Right cardiac atrium (tissue), 5 donors: ENCODE measurements at regions of chr9 and their contacts with region 1.

Region 1: GRCh38 chr9:108565651-108566378 is 290.0 kb downstream of the ACTL7B start:
- DNase-seq: peak in 2 of 3 donors; percentile 27 to 72
- ATAC-seq: peak; percentile 92 to 95
- H3K4me3 ChIP-seq: no peak overlapping the region
- H3K27ac ChIP-seq: no peak overlapping the region
- H3K4me1 ChIP-seq: peaks cover 4% of the 10 kb centered on the region
- H3K27me3 ChIP-seq: no peaks in the 10 kb centered on the region

Region 2: GRCh38 chr9:107465467-107466451 is 1100.1 kb before region 1 on chr9:
- intact Hi-C with region 1: loop called in 2 of 4 experiments (anchors 5 kb)
- DNase-seq: peak; percentile 84 to 93 (median 91)
- ATAC-seq: peak; percentile 99
- H3K4me3 ChIP-seq: peak overlapping the region; percentile 36
- H3K27ac ChIP-seq: no peak overlapping the region
- H3K4me1 ChIP-seq: peaks cover 2% of the 10 kb centered on the region
- H3K27me3 ChIP-seq: no peaks in the 10 kb centered on the region

Region 3: GRCh38 chr9:107484117-107484723 is 1081.6 kb before region 1 on chr9:
- intact Hi-C with region 1: loop called in 3 of 4 experiments (anchors 5 to 10 kb)
- DNase-seq: no peak
- ATAC-seq: peak in 1 of 2 donors; percentile 68
- H3K4me3 ChIP-seq: peak overlapping the region; percentile 29
- H3K27ac ChIP-seq: no peak overlapping the region
- H3K4me1 ChIP-seq: no peaks in the 10 kb centered on the region
- H3K27me3 ChIP-seq: no peaks in the 10 kb centered on the region

Region 4: DNA sequence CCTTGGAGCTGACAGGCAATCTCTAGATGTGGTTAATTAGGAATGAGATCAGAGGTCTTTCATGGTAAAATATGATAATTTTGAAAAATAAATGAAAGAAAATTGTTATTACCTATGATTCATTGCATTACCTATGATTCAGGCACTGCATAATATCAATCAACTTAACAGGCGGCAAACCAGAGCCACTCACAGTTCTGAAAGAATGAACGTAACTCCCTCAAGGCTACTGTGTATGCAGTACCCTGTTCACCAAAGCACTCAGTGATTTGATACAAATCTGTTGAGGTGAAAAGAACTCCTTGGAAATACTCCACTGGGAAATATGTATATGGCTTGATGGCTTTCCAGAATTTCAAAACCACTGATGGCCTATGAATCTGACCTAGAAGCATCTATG is 108.9 kb before region 1 on chr9:
- intact Hi-C with region 1: no loop called
- DNase-seq: no peak
- ATAC-seq: no peak
- H3K4me3 ChIP-seq: no peak overlapping the region
- H3K27ac ChIP-seq: no peak overlapping the region
- H3K4me1 ChIP-seq: no peaks in the 10 kb centered on the region
- H3K27me3 ChIP-seq: peaks cover 3% of the 10 kb centered on the region

Region 5: GRCh38 chr9:108609227-108609896 is 43.5 kb after region 1 on chr9:
- intact Hi-C with region 1: no loop called
- DNase-seq: no peak
- ATAC-seq: peak in 1 of 2 donors; percentile 59
- H3K4me3 ChIP-seq: no peak overlapping the region
- H3K27ac ChIP-seq: no peak overlapping the region
- H3K4me1 ChIP-seq: no peaks in the 10 kb centered on the region
- H3K27me3 ChIP-seq: no peaks in the 10 kb centered on the region